Psoas muscle (tissue), 8 donors: ENCODE measurements at regions of chr12 and their contacts with region 1.

Region 1: DNA sequence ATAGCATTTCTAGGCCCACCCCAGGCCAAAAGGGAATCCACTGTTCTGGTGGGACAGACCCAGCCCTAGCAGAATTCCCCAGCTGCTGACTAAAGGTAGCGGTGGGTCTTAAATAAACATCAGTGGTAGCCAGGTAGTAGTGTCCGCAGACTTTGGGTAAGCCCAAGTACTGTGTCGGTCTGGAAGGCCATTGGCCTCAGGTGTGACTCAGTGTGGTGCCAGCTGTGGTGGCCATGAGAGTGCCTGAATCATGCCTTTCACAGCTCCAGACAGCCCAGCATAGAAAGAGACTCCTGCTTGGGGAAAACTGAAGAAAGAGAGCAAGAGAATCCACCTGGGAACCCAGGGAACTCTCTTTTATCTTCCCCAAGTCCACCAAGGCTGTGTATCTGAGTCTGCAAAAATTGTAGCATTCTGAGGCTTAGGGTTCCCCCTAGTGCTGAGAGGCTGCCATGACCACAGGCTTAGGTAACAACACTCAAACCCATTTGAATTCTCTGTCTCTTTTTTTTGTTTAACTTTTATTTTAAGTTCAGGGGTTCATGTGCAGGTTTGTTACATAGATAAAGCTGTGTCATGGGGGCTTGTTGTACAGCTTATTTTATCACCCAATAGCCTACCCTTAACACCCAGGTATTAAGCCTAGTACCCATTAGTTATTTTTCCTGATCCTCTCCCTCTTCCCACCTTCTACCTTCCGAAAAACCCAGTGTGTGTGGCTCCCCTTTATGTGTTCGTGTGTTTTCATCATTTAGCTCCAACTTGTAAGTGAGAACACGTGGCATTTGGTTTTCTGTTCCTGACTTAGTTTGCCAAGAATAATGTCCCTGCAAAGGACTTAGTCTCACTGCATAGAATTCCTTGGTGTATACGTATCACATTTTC is 16.7 kb upstream of the CD163L1 start:
- DNase-seq: no peak
- ATAC-seq: peak in 2 of 4 donors; percentile 62 to 67
- H3K4me3 ChIP-seq: no peak overlapping the region
- H3K27ac ChIP-seq: no peak overlapping the region
- H3K4me1 ChIP-seq: no peaks in the 10 kb centered on the region
- H3K27me3 ChIP-seq: no peaks in the 10 kb centered on the region
- CTCF ChIP-seq: peak; percentile 53

Region 2: GRCh38 chr12:7219599-7220243 is 240.9 kb before region 1 on chr12:
- intact Hi-C with region 1: loop called in 1 of 2 experiments (anchors 5 kb)
- DNase-seq: peak; percentile 48 to 69
- ATAC-seq: peak; percentile 36 to 77 (median 53)
- H3K4me3 ChIP-seq: no peak overlapping the region
- H3K27ac ChIP-seq: no peak overlapping the region
- H3K4me1 ChIP-seq: no peaks in the 10 kb centered on the region
- H3K27me3 ChIP-seq: no peaks in the 10 kb centered on the region
- CTCF ChIP-seq: peak; percentile 80